SK-N-SH (cell line): ENCODE measurements at regions of chr17 and their contacts with region 1.

Region 1: GRCh38 chr17:64281962-64282727 is 19.1 kb upstream of the TEX2 start:
- DNase-seq: peak; percentile 80
- H3K4me3 ChIP-seq: no peak overlapping the region
- H3K27ac ChIP-seq: no peak overlapping the region
- H3K4me1 ChIP-seq: peaks cover 0 to 3% of the 10 kb centered on the region in 2 experiments; a peak in 1 of 4 replicates
- H3K27me3 ChIP-seq: no peaks in the 10 kb centered on the region
- CTCF ChIP-seq: peak; percentile 99
- EP300 ChIP-seq: no peak
- RAD21 ChIP-seq: peak; percentile 100

Region 2: DNA sequence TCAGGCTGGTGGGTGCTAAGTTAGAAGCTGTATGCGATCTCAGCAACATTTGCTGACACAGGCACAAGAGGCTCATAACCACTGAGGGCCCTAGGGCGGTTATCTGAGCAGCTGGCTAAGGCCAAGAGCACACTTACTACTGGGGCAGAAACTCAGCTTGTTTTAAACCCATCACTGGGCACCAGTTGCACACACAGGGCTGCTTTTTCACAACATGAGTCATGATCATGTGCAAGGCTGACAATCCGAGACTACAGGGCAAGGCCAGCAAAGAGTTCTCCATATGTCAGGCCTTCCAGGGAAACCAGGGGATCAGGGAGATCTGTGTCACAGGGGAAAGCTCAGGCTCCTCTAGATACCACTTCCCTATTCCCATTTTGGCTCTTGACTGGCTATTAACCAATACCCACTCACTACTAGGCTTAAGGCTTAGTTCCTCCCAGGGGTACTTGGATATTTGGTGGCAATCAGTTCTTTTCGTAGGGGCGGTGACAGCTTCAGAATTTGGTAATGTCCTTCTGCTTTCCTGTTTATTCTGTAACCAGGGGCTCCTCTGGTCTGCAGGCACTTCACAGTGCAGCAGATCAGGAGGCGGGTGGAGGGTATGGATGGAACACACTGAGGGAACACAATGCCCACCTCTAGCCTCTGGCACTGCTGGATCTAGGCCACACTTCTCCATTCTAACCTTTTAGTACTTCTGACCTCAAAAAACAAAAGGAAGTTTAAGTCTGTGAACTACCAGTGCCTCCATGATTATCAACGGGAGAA is 107.3 kb before region 1 on chr17:
- CTCF ChIA-PET with region 1: interaction called, 20 read pairs
- POLR2A ChIA-PET with region 1: no interaction called
- DNase-seq: no peak
- H3K4me3 ChIP-seq: no peak overlapping the region
- H3K27ac ChIP-seq: peak overlapping the region in 1 of 2 experiments; percentile 41; a peak in 1 of 4 replicates
- H3K4me1 ChIP-seq: peaks cover 16 to 42% of the 10 kb centered on the region in 2 experiments; a peak in 3 of 4 replicates
- H3K27me3 ChIP-seq: no peaks in the 10 kb centered on the region
- CTCF ChIP-seq: no peak
- EP300 ChIP-seq: no peak
- RAD21 ChIP-seq: no peak

Region 3: DNA sequence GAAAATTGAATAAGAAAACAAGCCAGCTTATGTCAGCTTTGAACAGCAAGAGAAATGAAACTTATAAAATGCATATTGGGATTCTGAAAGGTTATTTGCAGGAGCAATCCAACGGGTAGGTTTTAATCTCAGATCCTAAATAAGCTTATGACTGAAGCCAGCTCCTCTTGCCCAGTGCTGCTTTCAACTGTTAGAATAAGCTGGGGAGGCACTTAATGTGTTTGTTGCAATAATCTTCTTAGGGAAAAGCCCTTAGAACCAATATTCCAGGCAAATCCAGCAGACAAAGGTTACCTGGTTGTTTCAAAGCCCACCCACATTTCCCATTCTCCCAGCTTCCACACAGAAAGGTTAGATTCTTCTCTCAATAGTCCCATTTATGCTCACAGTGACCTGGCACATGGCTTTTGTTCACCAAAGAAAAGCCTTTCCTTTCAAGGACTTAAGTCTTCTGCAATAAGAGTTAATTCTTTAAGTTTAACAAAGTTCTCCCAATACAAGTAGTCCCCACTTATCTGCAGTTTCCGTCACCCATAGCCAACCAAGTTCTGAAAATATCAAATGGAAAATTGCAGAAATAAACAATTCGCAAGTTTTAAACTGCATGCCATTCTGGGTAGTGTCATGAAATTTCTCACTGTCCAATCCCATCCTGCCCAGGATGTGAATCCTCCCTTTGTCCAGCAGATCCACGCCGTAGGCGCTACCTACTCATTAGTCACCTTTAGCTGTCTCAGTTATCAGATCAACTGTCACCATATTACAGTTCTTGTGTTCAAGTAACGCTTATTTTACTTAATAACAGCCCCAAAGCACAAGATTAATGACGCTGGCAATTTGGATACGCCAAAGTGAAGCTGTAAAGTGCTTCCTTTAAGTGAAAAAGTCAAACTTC is 25.0 kb before region 1 on chr17:
- CTCF ChIA-PET with region 1: interaction called, 18 read pairs
- POLR2A ChIA-PET with region 1: no interaction called
- DNase-seq: no peak
- H3K4me3 ChIP-seq: no peak overlapping the region
- H3K27ac ChIP-seq: peak overlapping the region; percentile 32 to 55; a peak in 3 of 4 replicates
- H3K4me1 ChIP-seq: peaks cover 48 to 55% of the 10 kb centered on the region in 2 experiments; a peak in 3 of 4 replicates
- H3K27me3 ChIP-seq: no peaks in the 10 kb centered on the region
- CTCF ChIP-seq: no peak
- EP300 ChIP-seq: peak in 1 of 2 experiments; percentile 59; a peak in 1 of 4 replicates
- RAD21 ChIP-seq: no peak

Region 4: DNA sequence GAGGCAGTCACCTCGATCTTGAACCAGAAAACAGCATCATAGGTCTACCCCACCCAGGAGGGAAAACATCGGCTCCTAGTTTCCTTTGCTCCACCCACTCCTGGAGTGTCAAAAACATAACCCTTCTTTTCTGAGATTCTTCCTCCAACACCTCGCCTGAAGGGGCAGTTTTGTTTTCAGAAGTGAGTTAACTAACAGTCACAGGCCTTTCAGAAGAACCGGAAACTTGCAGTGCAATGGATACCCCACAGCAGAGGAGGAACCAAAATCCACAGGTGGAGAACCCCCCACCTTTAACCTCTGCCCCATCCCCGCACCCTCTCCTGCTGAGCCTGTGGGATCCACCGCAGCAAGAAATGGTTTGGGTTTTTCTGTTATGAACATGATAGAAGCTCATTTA is 11.3 kb before region 1 on chr17:
- CTCF ChIA-PET with region 1: interaction called, 32 read pairs
- POLR2A ChIA-PET with region 1: no interaction called
- DNase-seq: no peak
- H3K4me3 ChIP-seq: no peak overlapping the region
- H3K27ac ChIP-seq: no peak overlapping the region
- H3K4me1 ChIP-seq: peaks cover 0 to 7% of the 10 kb centered on the region in 2 experiments; a peak in 1 of 4 replicates
- H3K27me3 ChIP-seq: no peaks in the 10 kb centered on the region
- CTCF ChIP-seq: no peak
- EP300 ChIP-seq: no peak
- RAD21 ChIP-seq: no peak

Region 5: GRCh38 chr17:64331366-64331765 is 49.2 kb after region 1 on chr17:
- CTCF ChIA-PET with region 1: no interaction called
- POLR2A ChIA-PET with region 1: no interaction called
- DNase-seq: no peak
- H3K4me3 ChIP-seq: no peak overlapping the region
- H3K27ac ChIP-seq: no peak overlapping the region
- H3K4me1 ChIP-seq: peaks cover 15 to 23% of the 10 kb centered on the region in 2 experiments; a peak in 2 of 4 replicates
- H3K27me3 ChIP-seq: no peaks in the 10 kb centered on the region
- CTCF ChIP-seq: no peak
- EP300 ChIP-seq: no peak
- RAD21 ChIP-seq: no peak